IMR-90 (cell line): ENCODE measurements at regions of chr18 and their contacts with region 1.

Region 1: DNA sequence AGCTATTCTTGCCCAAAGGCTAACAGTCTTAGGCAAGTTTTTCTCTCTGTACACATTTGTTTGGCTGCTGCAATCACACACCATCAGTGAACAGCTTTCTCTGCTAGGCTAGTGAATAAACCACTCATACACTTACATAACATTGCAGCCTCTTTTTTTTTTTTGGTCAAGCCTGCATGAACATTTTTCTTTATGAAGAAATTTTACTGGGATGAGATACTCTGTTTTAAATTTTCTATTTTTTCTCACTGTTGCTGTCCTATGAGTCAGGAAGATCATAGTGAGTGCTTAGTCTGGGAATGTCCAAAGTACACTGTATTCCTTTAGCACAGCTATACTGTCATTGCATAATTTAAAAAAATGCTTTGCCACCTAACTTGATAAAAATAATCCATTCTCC is 58.5 kb downstream of the ROCK1 start:
- DNase-seq: peak; percentile 90
- ATAC-seq: peak; percentile 94
- H3K4me3 ChIP-seq: no peak overlapping the region
- H3K27ac ChIP-seq: no peak overlapping the region
- H3K4me1 ChIP-seq: peaks cover 10% of the 10 kb centered on the region
- H3K27me3 ChIP-seq: no peaks in the 10 kb centered on the region
- CTCF ChIP-seq: no peak
- POLR2A ChIP-seq: no peak
- RAD21 ChIP-seq: no peak

Region 2: GRCh38 chr18:20960735-20961134 is 92.4 kb before region 1 on chr18:
- CTCF ChIA-PET with region 1: no interaction called
- POLR2A ChIA-PET with region 1: no interaction called
- dilution Hi-C with region 1: no loop called
- in situ Hi-C with region 1: no loop called
- intact Hi-C with region 1: loop called (anchors 5 kb)
- DNase-seq: no peak
- ATAC-seq: no peak
- H3K4me3 ChIP-seq: no peak overlapping the region
- H3K27ac ChIP-seq: no peak overlapping the region
- H3K4me1 ChIP-seq: no peaks in the 10 kb centered on the region
- H3K27me3 ChIP-seq: no peaks in the 10 kb centered on the region
- CTCF ChIP-seq: no peak
- POLR2A ChIP-seq: no peak
- RAD21 ChIP-seq: no peak

Region 3: DNA sequence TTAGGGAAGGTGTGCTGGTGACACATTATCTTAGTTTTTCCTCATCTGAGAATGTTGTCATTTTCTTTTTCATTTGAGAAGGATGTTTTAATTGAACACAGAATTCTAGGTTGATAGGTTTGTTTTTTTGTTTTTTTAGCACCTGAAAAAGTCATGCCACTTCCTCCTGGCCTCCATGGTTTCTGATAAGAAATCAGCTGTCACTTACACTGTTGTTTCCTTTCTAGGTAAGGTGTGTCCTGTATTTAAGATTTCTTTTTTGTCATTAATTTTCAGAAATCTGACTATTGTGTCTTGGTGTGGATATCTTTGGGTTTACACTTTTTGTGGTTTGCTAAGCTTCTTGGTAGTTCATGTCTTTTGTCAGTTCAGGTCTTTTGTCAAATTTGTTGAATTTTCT is 40.8 kb before region 1 on chr18:
- CTCF ChIA-PET with region 1: no interaction called
- POLR2A ChIA-PET with region 1: no interaction called
- dilution Hi-C with region 1: no loop called
- in situ Hi-C with region 1: no loop called
- intact Hi-C with region 1: no loop called
- DNase-seq: no peak
- ATAC-seq: no peak
- H3K4me3 ChIP-seq: no peak overlapping the region
- H3K27ac ChIP-seq: no peak overlapping the region
- H3K4me1 ChIP-seq: peaks cover 2% of the 10 kb centered on the region; the same call in 1 of the 2 replicates
- H3K27me3 ChIP-seq: no peaks in the 10 kb centered on the region
- CTCF ChIP-seq: no peak
- POLR2A ChIP-seq: no peak
- RAD21 ChIP-seq: no peak

Region 4: DNA sequence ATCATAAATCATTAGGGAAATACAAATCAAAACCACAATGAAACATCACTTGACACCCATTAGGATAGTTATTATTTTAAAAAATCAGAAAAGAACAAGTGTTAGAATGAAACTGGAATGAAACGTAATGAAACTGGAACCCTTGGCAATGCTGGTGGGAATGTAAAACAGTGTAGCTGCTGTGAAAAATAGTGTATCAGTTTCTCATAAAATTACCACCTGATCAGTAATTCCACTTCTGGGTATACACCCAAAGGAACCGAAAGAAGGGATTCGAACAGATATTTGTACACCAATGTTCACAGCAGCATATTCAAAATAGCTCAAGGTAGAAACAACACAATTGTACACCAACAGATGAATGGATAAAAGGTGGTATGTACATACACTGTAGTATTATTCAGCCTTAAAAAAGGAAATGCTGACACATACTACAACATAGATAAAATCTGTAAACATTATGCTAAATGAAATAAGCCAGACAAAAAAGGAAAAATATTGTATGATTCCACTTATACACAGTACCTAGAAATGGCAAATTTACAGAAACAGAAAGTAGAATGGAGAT is 31.5 kb after region 1 on chr18:
- CTCF ChIA-PET with region 1: no interaction called
- POLR2A ChIA-PET with region 1: no interaction called
- dilution Hi-C with region 1: no loop called
- in situ Hi-C with region 1: no loop called
- intact Hi-C with region 1: loop called (anchors 5 kb)
- DNase-seq: no peak
- ATAC-seq: no peak
- H3K4me3 ChIP-seq: no peak overlapping the region
- H3K27ac ChIP-seq: no peak overlapping the region
- H3K4me1 ChIP-seq: no peaks in the 10 kb centered on the region
- H3K27me3 ChIP-seq: no peaks in the 10 kb centered on the region
- CTCF ChIP-seq: no peak
- POLR2A ChIP-seq: no peak
- RAD21 ChIP-seq: no peak

Region 5: DNA sequence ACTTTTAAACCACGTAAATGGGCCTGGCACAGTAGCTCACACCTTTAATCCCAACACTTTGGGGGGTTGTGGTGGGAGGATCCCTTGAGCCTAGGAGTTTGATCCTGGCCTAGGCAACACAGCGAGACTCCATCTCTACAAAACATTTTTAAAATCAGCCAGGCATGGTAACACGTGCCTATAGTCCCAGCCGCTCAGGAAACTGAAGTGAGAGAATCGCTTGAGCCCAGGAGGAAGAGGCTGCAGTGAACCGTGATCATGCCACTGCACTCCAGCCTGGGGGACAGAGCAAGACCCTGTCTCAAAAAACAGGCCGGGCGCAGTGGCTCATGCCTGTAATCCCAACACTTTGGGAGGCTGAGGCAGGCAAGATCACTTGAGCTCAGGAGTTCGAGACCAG is 46.3 kb after region 1 on chr18:
- CTCF ChIA-PET with region 1: no interaction called
- POLR2A ChIA-PET with region 1: no interaction called
- dilution Hi-C with region 1: no loop called
- in situ Hi-C with region 1: no loop called
- intact Hi-C with region 1: loop called (anchors 5 kb)
- DNase-seq: no peak
- ATAC-seq: no peak
- H3K4me3 ChIP-seq: no peak overlapping the region
- H3K27ac ChIP-seq: no peak overlapping the region
- H3K4me1 ChIP-seq: 0 out of 2 replicates have a peak, but pooled peaks cover 2% of the 10 kb centered on the region
- H3K27me3 ChIP-seq: no peaks in the 10 kb centered on the region
- CTCF ChIP-seq: no peak
- POLR2A ChIP-seq: no peak
- RAD21 ChIP-seq: no peak

Region 6: DNA sequence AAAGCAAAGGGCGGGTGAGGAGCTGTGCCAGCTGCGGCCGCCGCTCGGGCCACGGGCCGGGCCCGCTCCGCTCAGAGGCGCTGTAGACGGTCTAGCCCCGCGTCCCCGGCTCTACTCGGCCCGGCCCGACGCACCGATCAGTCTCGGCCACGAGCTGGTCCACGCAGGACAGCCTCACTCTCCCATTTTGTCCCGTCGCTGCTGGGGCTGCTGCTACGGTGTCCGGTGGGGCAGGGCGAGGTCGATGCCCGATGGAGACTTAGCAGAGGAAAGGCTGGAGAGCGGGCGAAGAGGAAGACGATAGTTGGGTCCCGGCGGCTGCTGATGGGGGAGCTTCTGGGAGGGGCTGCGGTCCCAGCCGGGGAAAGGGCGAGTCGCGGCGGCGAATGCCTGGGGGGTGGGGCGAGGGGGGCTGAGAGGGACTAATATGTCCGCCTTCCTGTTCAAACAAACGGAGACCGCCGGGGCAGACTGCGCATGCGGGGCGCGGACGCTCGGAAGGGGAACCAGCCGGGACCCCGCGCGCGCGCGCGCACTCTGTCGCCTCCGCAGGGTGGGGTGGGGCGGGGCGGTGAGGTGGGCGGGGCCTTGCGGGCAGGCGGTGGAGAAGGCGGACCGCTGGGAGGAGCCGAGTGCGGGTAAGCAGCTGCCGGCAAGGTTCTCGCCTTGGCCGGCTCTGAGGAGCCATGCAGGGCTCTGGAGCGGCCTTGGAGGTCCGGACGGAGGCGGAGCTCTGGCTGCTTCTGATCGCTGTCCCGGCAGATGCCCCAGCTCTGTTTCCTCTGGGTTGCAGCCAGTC is 58.4 kb after region 1 on chr18 and contains the start of gene ROCK1:
- CTCF ChIA-PET with region 1: no interaction called
- POLR2A ChIA-PET with region 1: interaction called, 3 read pairs
- dilution Hi-C with region 1: no loop called
- in situ Hi-C with region 1: loop called (anchors 5 kb)
- intact Hi-C with region 1: loop called (anchors 5 kb)
- DNase-seq: peak; percentile 96
- ATAC-seq: peak; percentile 92
- H3K4me3 ChIP-seq: peak within 1 kb of the TSS; percentile 91
- H3K27ac ChIP-seq: peak within 1 kb of the TSS; percentile 99
- H3K4me1 ChIP-seq: peaks cover 7% of the 10 kb centered on the region
- H3K27me3 ChIP-seq: no peaks in the 10 kb centered on the region
- CTCF ChIP-seq: no peak
- POLR2A ChIP-seq: peak; percentile 79
- RAD21 ChIP-seq: no peak; the same call in 1 of the 2 replicates
- total RNA-seq, gene ROCK1: 17.0 and 33.6 TPM in 2 replicates

Region 7: DNA sequence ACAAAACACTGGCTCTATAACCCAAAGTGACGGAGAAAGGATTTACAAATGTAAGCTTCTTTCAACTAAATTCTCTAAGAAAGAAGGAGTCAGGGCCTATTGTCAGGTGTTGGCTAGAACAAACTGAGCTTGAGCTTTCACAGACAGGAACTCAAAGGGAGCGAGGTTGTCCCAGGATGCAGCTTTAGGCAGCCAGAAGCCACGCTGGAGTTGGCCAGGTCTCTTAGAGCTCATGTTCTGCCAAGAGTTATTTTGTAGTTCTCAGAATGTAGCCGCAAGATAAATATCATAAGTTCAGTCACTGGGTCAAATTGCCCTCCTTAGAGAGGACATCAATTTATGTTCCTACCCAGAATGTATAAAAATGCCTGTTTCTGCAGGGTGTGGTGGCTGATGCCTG is 134.8 kb after region 1 on chr18:
- CTCF ChIA-PET with region 1: no interaction called
- POLR2A ChIA-PET with region 1: no interaction called
- dilution Hi-C with region 1: no loop called
- in situ Hi-C with region 1: no loop called
- intact Hi-C with region 1: loop called (anchors 5 kb)
- DNase-seq: no peak
- ATAC-seq: no peak
- H3K4me3 ChIP-seq: no peak overlapping the region
- H3K27ac ChIP-seq: no peak overlapping the region
- H3K4me1 ChIP-seq: no peaks in the 10 kb centered on the region
- H3K27me3 ChIP-seq: peaks cover 10% of the 10 kb centered on the region; the same call in 1 of the 2 replicates
- CTCF ChIP-seq: no peak
- POLR2A ChIP-seq: no peak
- RAD21 ChIP-seq: no peak

Region 8: DNA sequence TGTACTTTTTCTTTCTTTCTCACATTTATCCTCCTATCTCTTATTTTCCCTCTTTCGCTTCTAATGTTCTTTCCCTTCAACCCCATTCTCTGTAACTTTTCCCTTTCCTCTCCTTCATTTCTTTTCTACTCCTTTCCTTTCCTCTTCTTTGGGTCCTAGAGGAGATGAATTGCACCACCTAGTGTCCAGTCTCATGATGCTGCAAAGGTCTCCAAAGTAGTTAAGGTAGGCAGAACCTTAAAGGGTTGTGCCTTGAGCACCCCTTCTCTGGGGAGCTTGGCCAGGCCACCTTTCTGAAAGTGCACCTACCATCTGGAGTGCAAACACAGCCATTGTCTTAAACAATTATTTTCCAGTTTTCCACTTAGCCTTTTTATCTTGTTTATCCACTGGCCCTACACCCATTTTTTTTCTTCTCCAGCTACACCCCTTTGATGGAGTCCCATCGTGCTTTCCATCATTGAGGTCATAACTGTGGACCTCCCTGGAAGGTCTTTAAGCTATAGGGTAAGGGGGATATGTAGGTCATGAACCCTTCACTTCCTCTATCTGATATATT is 391.4 kb after region 1 on chr18:
- CTCF ChIA-PET with region 1: no interaction called
- POLR2A ChIA-PET with region 1: no interaction called
- dilution Hi-C with region 1: no loop called
- in situ Hi-C with region 1: no loop called
- intact Hi-C with region 1: loop called (anchors 5 kb)
- DNase-seq: peak; percentile 59
- ATAC-seq: peak; percentile 79
- H3K4me3 ChIP-seq: no peak overlapping the region
- H3K27ac ChIP-seq: no peak overlapping the region
- H3K4me1 ChIP-seq: peaks cover 2% of the 10 kb centered on the region
- H3K27me3 ChIP-seq: peaks cover 5% of the 10 kb centered on the region
- CTCF ChIP-seq: peak; percentile 67
- POLR2A ChIP-seq: no peak
- RAD21 ChIP-seq: peak; percentile 65

Region 9: GRCh38 chr18:21897811-21898210 is 844.7 kb after region 1 on chr18:
- CTCF ChIA-PET with region 1: no interaction called
- POLR2A ChIA-PET with region 1: no interaction called
- dilution Hi-C with region 1: no loop called
- in situ Hi-C with region 1: no loop called
- intact Hi-C with region 1: no loop called
- DNase-seq: peak; percentile 42
- ATAC-seq: peak; percentile 87
- H3K4me3 ChIP-seq: no peak overlapping the region
- H3K27ac ChIP-seq: no peak overlapping the region
- H3K4me1 ChIP-seq: no peaks in the 10 kb centered on the region; the same call in 1 of the 2 replicates
- H3K27me3 ChIP-seq: no peaks in the 10 kb centered on the region; the same call in 1 of the 2 replicates
- CTCF ChIP-seq: peak; percentile 66
- POLR2A ChIP-seq: no peak
- RAD21 ChIP-seq: peak; percentile 71